ENCODE measurements at regions of chr5 and their contacts with region 1.

Region 1: GRCh38 chr5:50962934-50963872 is 296.8 kb downstream of the PARP8 start:
- DNase-seq: peak; percentile 86
- H3K4me3 Mint-ChIP-seq: peak overlapping the region; percentile 75
- H3K27ac Mint-ChIP-seq: peak overlapping the region; percentile 70
- H3K4me1 Mint-ChIP-seq: peaks cover 22% of the 10 kb centered on the region
- H3K27me3 Mint-ChIP-seq: no peaks in the 10 kb centered on the region
- CTCF ChIP-seq: peak; percentile 94

Region 2: DNA sequence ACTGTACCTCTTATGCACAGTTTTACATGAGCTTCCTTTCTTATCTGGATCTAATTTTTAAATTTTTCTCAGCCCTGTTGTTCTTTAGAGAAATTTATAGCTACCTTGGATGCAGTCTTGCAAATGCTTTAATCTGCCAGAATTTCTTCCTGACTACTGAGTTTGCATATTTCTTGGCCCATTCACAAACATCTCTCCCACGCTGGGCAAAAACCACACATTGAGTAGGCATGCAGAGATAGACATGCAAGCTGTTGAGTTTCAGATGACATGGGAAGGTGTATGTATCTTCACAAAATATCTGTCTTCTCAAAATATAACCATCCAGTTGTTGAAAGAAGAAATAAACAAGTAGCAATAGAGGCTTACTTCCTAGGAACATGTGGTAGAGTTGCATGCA is 195.6 kb before region 1 on chr5:
- CTCF ChIA-PET with region 1: no interaction called
- intact Hi-C with region 1: no loop called
- DNase-seq: no peak
- H3K4me3 Mint-ChIP-seq: no peak overlapping the region
- H3K27ac Mint-ChIP-seq: no peak overlapping the region
- H3K4me1 Mint-ChIP-seq: no peaks in the 10 kb centered on the region
- H3K27me3 Mint-ChIP-seq: no peaks in the 10 kb centered on the region
- CTCF ChIP-seq: no peak

Region 3: GRCh38 chr5:51033215-51033614 is 70.0 kb after region 1 on chr5:
- CTCF ChIA-PET with region 1: no interaction called
- intact Hi-C with region 1: no loop called
- DNase-seq: peak; percentile 21
- H3K4me3 Mint-ChIP-seq: no peak overlapping the region
- H3K27ac Mint-ChIP-seq: no peak overlapping the region
- H3K4me1 Mint-ChIP-seq: peaks cover 9% of the 10 kb centered on the region
- H3K27me3 Mint-ChIP-seq: no peaks in the 10 kb centered on the region
- CTCF ChIP-seq: no peak

Region 4: GRCh38 chr5:51382763-51383490 is 419.7 kb after region 1 on chr5 and contains the start of gene ISL1:
- CTCF ChIA-PET with region 1: interaction called, 5 read pairs
- intact Hi-C with region 1: loop called (anchors 10 kb)
- DNase-seq: peak; percentile 88
- H3K4me3 Mint-ChIP-seq: peak within 1 kb of the TSS; percentile 91
- H3K27ac Mint-ChIP-seq: peak within 1 kb of the TSS; percentile 89
- H3K4me1 Mint-ChIP-seq: peaks cover 45% of the 10 kb centered on the region
- H3K27me3 Mint-ChIP-seq: no peaks in the 10 kb centered on the region
- CTCF ChIP-seq: no peak
- total RNA-seq, gene ISL1: 9.4 and 11.7 TPM in 2 replicates

Region 5: DNA sequence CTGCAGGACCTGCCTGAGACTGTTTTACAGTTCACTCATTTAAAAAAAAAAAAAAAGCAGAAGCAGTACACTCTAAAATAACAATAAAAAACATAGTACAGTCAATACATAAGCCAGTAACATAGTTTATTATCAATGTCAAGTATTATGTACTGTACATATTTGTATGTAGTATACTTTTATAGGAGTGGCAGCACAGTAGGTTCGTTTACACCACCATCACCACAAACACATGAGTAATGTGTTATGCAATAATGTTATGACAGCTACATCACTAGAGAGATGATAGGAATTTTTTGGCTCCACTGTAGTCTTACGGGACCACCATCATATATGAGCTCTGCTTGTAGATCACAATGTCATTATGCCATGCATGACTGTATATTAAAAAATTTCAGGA is 882.8 kb after region 1 on chr5:
- CTCF ChIA-PET with region 1: interaction called, 4 read pairs
- intact Hi-C with region 1: loop called (anchors 2 kb)
- DNase-seq: no peak
- H3K4me3 Mint-ChIP-seq: no peak overlapping the region
- H3K27ac Mint-ChIP-seq: no peak overlapping the region
- H3K4me1 Mint-ChIP-seq: no peaks in the 10 kb centered on the region
- H3K27me3 Mint-ChIP-seq: no peaks in the 10 kb centered on the region
- CTCF ChIP-seq: no peak

Region 6: DNA sequence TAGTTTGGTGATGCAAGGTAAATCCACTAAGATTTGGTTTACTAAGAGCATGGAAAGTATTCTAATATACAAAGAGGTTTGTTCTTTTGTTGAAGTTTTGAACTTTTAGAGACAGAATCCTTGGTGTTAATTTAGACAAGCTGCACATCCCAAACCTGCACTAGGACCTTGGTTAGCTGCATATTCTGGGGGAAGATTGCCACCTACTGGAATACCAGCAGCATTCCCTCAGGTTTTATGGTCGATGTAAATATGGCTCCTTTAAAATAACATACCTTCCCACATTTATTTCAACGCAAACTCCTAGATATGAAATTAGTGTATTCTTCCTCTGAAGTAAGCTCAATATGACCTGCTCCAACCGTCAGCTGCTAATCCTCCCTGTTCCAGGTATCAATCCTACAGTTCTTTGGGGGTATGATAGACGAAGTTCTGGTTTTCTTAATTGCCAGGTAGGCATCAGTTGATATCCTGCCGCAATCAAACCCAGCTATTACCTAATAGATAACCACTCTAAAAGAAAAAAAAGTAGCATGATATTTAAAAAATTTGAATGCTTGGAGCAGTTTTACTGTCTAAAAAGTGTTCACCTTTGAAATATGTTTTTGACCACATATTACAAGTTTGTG is 1044.1 kb after region 1 on chr5:
- CTCF ChIA-PET with region 1: interaction called, 7 read pairs
- intact Hi-C with region 1: loop called (anchors 1 kb)
- DNase-seq: peak; percentile 54
- H3K4me3 Mint-ChIP-seq: peak overlapping the region; percentile 43
- H3K27ac Mint-ChIP-seq: no peak overlapping the region
- H3K4me1 Mint-ChIP-seq: peaks cover 15% of the 10 kb centered on the region
- H3K27me3 Mint-ChIP-seq: no peaks in the 10 kb centered on the region
- CTCF ChIP-seq: peak; percentile 56

Region 7: DNA sequence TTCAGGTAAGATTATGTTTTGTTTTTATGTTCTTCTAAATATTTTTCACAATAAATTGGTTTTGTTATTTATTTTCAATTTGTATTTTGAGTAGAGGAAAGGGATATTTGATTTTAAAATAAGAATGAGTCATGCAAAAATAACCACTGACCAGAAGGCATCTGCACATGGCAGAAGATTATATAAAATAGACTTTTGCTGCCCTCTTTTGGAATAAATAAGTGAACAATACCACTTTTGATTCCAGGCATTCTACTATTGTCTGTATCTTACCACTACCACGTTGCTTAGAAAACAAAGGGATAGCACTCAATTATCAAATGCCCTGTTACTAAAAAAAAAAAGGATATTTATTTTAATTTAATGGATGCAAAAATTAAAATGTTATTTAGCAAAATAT is 1597.2 kb after region 1 on chr5:
- CTCF ChIA-PET with region 1: no interaction called
- intact Hi-C with region 1: loop called (anchors 2 kb)
- DNase-seq: no peak
- H3K4me3 Mint-ChIP-seq: no peak overlapping the region
- H3K27ac Mint-ChIP-seq: no peak overlapping the region
- H3K4me1 Mint-ChIP-seq: no peaks in the 10 kb centered on the region
- H3K27me3 Mint-ChIP-seq: no peaks in the 10 kb centered on the region
- CTCF ChIP-seq: peak; percentile 44

Measured in Calu3 (cell line).